BJ (cell line): ENCODE measurements at regions of chr1 and their contacts with region 1.

Region 1: GRCh38 chr1:47710329-47711071 is 272.7 kb downstream of the FOXD2 start:
- DNase-seq: no peak
- H3K4me3 ChIP-seq: no peak overlapping the region
- H3K27me3 ChIP-seq: peaks cover 33% of the 10 kb centered on the region
- CTCF ChIP-seq: peak; percentile 96

Region 2: DNA sequence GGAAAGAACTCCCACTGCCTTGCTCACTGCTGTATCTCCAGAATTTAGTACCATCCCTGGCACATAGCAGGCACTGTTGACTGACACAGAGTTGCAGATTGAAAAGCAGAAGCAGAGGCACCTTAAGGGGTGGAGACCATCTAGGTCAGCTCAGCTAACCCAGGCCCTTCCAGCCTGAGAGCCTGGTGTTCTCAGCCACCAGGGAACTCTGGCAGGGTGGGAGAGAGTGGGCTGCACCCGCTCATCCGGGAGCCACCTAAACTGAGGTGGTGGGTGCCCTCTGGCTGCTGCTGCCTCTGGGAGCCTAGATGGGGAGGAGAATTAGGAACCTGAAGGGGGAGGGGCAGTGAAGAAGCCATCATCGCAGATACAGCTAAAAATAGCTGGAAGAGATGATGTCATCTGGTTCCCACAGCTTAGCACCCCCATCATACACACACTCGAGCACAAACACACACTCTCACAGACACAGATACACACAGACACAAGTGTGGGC is 1537.1 kb before region 1 on chr1:
- CTCF ChIA-PET with region 1: no interaction called
- POLR2A ChIA-PET with region 1: no interaction called
- DNase-seq: no peak
- H3K4me3 ChIP-seq: no peak overlapping the region
- H3K27me3 ChIP-seq: peaks cover 3% of the 10 kb centered on the region
- CTCF ChIP-seq: no peak

Region 3: DNA sequence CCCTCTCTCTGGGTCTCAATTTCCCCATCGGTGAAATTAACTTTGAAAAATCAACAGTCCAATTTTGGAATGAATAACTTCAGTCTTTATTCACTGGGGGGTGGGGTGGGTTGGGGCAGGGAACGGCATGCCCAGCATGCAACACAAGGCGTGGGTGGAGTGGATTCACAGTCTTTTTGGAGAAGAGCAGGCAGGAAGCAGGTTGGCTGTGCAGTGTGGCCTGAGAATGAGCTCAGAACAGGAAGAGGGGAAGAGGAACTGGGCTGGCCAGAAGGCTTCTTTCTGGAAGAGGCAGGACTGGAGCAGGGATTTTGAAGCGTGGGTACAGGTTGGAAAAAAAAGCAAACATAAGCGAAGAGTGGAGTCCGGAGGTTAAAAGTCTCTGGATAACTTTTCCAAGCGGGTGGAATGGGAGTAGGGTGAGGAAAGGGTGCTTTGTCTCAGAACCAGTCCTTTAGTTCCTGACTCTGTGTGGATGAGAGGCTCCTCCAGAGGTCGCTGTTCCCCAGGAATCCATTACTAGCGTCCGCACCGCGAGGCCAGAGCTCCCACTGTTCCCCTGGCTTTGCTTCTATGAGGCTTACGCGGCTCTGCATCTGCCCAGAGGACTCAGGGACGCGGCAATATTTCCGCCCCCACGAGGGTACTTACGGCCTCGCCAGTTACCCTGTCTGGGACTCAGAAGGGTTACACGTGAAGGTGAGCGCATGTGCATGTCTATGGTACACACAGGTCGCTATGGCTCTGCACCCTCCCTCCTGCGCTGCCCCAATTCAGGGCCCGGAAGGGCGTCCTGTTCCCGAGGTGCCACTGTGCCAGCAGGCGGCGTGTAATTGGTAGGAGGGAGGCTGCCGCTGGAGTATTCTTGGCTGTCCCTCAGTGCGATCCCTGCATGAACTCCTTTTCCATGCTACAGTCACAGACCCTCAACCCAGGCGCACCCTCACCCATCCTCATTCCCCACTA is 278.1 kb before region 1 on chr1:
- CTCF ChIA-PET with region 1: interaction called, 167 read pairs
- POLR2A ChIA-PET with region 1: no interaction called
- DNase-seq: no peak
- H3K4me3 ChIP-seq: no peak overlapping the region
- H3K27me3 ChIP-seq: no peaks in the 10 kb centered on the region
- CTCF ChIP-seq: peak; percentile 81

Region 4: DNA sequence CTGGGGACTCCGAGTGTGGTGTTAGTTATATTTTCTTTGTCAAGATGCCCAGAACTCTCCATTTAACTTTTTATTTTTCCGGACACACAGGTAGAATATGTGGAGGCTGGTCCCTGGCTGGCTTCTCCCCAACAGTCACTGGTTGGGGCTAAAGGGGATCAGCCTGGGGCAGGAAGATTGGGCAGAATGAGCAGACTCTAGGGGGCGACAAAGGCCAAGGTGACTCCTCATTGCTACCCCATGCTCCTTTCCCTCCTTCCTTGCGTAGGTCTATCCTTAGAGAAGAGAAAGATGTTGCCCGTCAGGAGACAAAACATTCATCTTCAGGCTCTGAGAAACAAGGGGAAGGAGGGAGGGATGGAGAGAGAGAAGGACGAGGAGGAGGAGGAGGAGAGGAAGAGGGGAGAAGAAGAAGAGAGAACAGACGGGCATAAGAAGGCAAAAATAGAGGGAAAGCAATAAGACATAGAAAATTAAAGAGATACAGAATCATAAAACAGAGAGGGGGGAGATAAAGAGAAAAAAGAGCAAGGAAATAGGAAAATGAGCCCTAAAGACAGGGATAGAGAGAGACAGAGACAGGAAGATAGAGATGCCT is 182.7 kb before region 1 on chr1:
- CTCF ChIA-PET with region 1: interaction called, 14 read pairs
- POLR2A ChIA-PET with region 1: no interaction called
- DNase-seq: no peak
- H3K4me3 ChIP-seq: no peak overlapping the region
- H3K27me3 ChIP-seq: peaks cover 4% of the 10 kb centered on the region
- CTCF ChIP-seq: peak; percentile 52

Region 5: GRCh38 chr1:47725992-47726855 is 15.7 kb after region 1 on chr1:
- CTCF ChIA-PET with region 1: interaction called, 46 read pairs
- POLR2A ChIA-PET with region 1: no interaction called
- DNase-seq: no peak
- H3K4me3 ChIP-seq: no peak overlapping the region
- H3K27me3 ChIP-seq: peaks cover 15% of the 10 kb centered on the region
- CTCF ChIP-seq: peak; percentile 95